CD14-positive monocyte (primary cell): ENCODE measurements at regions of chr18 and their contacts with region 1.

Region 1: DNA sequence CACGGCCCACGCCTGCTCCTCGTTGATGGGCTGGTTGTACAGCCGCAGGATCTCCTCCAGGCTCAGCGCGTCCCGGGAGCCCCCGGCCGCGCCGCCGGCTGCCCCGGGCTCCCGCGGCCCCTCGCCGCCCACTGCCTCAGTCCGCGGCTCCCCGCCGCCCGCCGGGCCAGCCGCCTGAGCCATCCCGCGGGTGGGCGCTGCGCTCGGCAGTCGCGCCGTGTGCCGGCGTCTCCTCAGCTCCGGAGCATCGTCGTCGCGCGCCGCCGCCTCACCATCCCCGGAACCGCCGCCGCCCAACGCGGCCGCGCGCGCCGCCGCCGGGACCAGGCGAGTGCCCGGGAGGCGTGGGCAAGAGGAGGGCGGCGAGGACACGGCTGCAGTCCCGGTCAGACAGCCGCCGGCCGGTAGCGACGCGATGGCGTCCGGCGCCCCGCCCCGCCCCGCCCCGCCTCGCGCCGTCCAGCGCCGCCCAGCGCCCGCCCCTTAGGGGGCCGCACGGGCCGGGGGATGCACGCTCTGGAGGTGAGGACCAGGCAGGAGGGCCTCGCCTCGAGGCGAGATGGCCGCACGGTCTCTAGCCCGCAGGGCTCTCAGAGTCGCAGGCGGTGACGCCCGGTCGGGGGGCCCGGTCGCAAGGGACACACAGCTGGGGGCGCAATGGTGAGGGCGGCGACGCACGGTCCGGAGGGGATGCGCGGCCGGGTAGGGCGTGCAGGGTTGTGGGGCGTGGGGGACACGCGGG is at the start of gene SPIRE1:
- DNase-seq: peak; percentile 38 to 47 (median 38)
- H3K4me3 ChIP-seq: peak within 1 kb of the TSS; percentile 46 to 84 (median 82)
- H3K4me3 Mint-ChIP-seq: peak within 1 kb of the TSS; percentile 83 to 91
- H3K27ac ChIP-seq: peak within 1 kb of the TSS in 1 of 2 donors; percentile 48
- H3K27ac Mint-ChIP-seq: peak within 1 kb of the TSS in 1 of 7 donors; percentile 41
- H3K4me1 ChIP-seq: peaks cover 11 to 19% of the 10 kb centered on the region in 2 donors
- H3K4me1 Mint-ChIP-seq: peaks cover 19% of the 10 kb centered on the region
- H3K27me3 ChIP-seq: peaks cover 7 to 21% of the 10 kb centered on the region in 2 donors
- H3K27me3 Mint-ChIP-seq: peaks cover 13 to 33% (median 23%) of the 10 kb centered on the region in 3 donors
- CTCF ChIP-seq: no peak
- polyA plus RNA-seq, gene SPIRE1: 1.7 to 1.9 (median 1.8) TPM

Region 2: DNA sequence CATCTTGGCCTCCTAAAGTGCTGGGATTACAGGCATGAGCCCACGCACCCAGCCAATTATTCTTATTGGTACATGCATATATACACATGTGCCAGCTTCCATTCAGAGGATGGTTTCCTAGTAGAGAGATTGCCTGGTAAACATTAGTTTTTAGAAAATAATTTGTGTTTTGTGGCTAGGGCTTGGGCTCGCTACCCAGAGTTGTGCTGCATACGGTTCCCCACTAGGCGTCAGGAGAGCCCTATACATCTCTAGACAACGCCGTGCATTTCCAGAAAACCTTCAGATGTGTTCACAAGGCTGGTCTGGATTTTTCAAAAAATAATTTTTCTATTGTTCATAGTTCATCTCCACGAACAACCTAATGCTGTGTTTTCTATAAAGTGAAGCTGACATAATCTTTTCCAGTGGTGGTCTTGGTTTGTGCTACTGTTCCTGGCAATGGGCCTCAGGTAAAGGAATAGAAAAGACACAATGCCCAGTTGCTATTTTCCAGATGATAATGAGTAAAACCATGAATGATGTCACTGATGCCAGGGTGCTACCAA is 266.2 kb before region 1 on chr18:
- intact Hi-C with region 1: loop called (anchors 2 kb)
- DNase-seq: peak; percentile 43 to 58 (median 53)
- H3K4me3 ChIP-seq: no peak overlapping the region
- H3K4me3 Mint-ChIP-seq: no peak overlapping the region
- H3K27ac ChIP-seq: no peak overlapping the region
- H3K27ac Mint-ChIP-seq: no peak overlapping the region
- H3K4me1 ChIP-seq: no peaks in the 10 kb centered on the region
- H3K4me1 Mint-ChIP-seq: peaks cover 4% of the 10 kb centered on the region
- H3K27me3 ChIP-seq: no peaks in the 10 kb centered on the region
- H3K27me3 Mint-ChIP-seq: peaks cover 1 to 3% (median 2%) of the 10 kb centered on the region in 3 donors
- CTCF ChIP-seq: peak; percentile 86

Region 3: DNA sequence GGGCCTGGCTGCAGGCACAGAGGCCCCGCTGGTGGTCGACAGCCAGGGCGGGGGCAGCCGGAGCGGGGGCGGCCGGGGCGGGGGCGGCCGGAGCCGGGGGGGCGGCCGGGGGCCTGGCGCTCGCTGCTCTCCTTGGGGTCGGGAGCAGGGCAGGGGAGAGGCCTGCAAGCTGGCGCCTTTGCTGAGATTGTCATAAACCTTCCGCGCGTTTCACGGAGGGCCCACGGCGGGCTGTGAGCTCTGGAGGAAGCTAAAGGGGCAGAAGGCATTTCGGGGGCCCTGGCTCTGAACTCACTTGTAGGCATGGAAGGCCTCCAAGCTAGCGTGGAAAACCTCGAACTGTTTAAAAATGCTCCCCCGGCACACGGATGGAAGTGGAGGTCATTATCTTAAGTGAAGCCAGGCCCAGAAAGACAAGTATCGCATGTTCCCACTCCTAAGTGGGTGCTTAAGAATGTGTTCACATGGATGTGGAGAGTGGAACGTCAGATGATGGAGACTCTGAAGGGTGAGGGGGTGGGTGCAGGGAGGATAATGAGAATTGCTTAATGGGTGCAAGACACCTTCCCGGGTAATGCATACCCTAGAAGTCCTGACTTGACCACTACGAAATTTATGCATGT is 249.5 kb before region 1 on chr18:
- intact Hi-C with region 1: loop called (anchors 5 kb)
- DNase-seq: no peak
- H3K4me3 ChIP-seq: peak overlapping the region; percentile 23 to 71 (median 40)
- H3K4me3 Mint-ChIP-seq: peak overlapping the region; percentile 72 to 86
- H3K27ac ChIP-seq: no peak overlapping the region
- H3K27ac Mint-ChIP-seq: peak overlapping the region in 3 of 7 donors; percentile 40 to 61 (median 57)
- H3K4me1 ChIP-seq: peaks cover 14 to 18% of the 10 kb centered on the region in 2 donors
- H3K4me1 Mint-ChIP-seq: peaks cover 24% of the 10 kb centered on the region
- H3K27me3 ChIP-seq: peaks cover 14 to 27% of the 10 kb centered on the region in 2 donors
- H3K27me3 Mint-ChIP-seq: peaks cover 29 to 44% (median 31%) of the 10 kb centered on the region in 3 donors
- CTCF ChIP-seq: no peak

Region 4: DNA sequence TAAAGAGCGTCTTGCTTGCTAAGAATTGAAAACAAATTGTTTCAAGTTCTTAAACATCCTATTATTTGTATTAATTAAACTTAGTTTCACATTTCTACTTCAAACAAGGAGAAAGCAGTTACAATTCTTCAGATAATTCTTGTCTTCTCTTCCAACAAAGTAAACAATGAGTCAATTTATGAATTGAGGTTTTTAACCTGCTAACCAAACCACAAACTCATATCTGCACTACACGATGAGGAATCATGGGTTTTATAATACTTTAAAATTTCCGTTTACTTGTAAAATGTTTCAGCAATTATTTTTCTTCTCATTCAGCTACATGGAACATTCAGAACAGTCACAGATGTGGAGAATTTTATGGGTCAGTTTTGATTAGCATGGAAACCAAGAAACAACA is 114.2 kb before region 1 on chr18:
- intact Hi-C with region 1: loop called in 1 of 2 experiments (anchors 5 kb)
- DNase-seq: no peak
- H3K4me3 ChIP-seq: no peak overlapping the region
- H3K4me3 Mint-ChIP-seq: no peak overlapping the region
- H3K27ac ChIP-seq: no peak overlapping the region
- H3K27ac Mint-ChIP-seq: no peak overlapping the region
- H3K4me1 ChIP-seq: no peaks in the 10 kb centered on the region
- H3K4me1 Mint-ChIP-seq: no peaks in the 10 kb centered on the region
- H3K27me3 ChIP-seq: no peaks in the 10 kb centered on the region
- H3K27me3 Mint-ChIP-seq: peaks cover 0 to 3% (median 2%) of the 10 kb centered on the region in 3 donors
- CTCF ChIP-seq: no peak

Region 5: DNA sequence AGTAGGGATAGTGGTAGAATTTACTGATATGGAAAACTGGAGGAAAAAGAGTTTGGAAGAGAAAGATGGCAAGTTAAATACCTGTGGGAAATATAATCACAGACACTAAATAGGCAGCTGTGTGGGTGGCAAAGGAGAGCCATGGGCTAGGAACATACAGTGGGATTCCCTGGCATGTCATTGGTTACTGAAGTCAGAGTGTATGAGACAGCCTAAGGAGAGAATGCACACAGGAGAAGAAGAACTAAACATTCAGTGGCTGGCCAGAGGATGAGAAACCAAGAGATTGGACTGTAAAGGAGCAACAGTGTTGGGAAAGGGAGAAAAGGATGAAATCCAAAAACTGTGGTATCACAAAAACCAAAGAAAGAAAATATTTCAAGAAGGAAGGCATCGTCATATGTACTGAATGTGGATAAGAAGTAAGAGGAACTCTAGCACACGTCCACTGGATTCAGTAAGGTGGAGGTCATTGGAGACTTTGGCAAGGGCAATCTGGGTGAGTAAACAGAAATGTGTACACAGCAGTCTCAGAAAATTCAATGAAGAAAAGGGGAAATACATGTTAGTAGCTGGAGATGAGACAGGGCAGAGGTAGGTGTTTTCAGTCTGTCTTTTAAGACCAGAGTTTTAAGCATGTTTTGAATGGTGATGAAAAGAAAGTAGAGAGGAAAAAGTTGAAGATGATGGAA is 83.2 kb before region 1 on chr18:
- intact Hi-C with region 1: no loop called
- DNase-seq: no peak
- H3K4me3 ChIP-seq: no peak overlapping the region
- H3K4me3 Mint-ChIP-seq: no peak overlapping the region
- H3K27ac ChIP-seq: no peak overlapping the region
- H3K27ac Mint-ChIP-seq: no peak overlapping the region
- H3K4me1 ChIP-seq: no peaks in the 10 kb centered on the region
- H3K4me1 Mint-ChIP-seq: no peaks in the 10 kb centered on the region
- H3K27me3 ChIP-seq: no peaks in the 10 kb centered on the region
- H3K27me3 Mint-ChIP-seq: no peaks in the 10 kb centered on the region
- CTCF ChIP-seq: no peak

Region 6: DNA sequence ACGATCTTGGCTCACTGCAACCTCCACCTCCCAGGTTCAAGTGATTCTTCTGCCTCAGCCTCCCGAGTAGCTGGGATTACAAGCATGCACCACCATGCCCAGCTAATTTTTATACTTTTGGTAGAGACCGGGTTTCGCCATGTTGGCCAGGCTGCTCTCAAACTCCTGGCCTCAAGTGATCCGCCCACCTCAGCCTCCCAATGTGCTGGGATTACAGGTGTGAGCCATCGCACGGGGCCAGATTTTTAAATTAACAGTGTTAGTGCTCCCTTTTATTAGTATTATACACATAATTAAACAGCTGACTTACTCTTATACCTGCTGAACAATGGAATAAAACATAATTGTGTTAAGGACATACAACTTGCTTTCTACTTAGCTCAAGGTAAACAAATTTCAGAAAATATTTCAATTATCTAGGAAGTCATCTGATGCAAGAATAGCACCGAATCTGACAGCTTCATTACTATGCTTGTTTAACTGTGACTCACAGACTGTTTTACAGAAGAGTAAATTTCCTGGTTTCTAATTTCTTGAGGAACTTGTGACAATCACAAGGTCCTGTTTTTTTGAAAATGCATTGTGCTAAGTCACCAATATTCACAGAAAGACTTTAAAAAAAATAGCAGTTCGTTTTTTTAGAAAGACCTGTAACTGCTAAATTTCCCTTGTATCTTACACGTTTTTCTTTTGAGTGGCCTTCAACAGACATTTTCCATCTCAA is 51.1 kb before region 1 on chr18:
- intact Hi-C with region 1: loop called (anchors 5 to 10 kb)
- DNase-seq: peak; percentile 80 to 93 (median 92)
- H3K4me3 ChIP-seq: peak overlapping the region in 1 of 3 experiments; percentile 26
- H3K4me3 Mint-ChIP-seq: peak overlapping the region in 1 of 2 donors; percentile 78
- H3K27ac ChIP-seq: peak overlapping the region; percentile 88 to 97
- H3K27ac Mint-ChIP-seq: peak overlapping the region; percentile 96 to 100 (median 99)
- H3K4me1 ChIP-seq: peaks cover 16 to 20% of the 10 kb centered on the region in 2 donors
- H3K4me1 Mint-ChIP-seq: peaks cover 25% of the 10 kb centered on the region
- H3K27me3 ChIP-seq: no peaks in the 10 kb centered on the region
- H3K27me3 Mint-ChIP-seq: no peaks in the 10 kb centered on the region
- CTCF ChIP-seq: no peak

Region 7: GRCh38 chr18:12686100-12686499 is 28.2 kb after region 1 on chr18:
- intact Hi-C with region 1: no loop called
- DNase-seq: no peak
- H3K4me3 ChIP-seq: no peak overlapping the region
- H3K4me3 Mint-ChIP-seq: no peak overlapping the region
- H3K27ac ChIP-seq: no peak overlapping the region
- H3K27ac Mint-ChIP-seq: peak overlapping the region in 1 of 7 donors; percentile 72
- H3K4me1 ChIP-seq: no peaks in the 10 kb centered on the region
- H3K4me1 Mint-ChIP-seq: peaks cover 5% of the 10 kb centered on the region
- H3K27me3 ChIP-seq: no peaks in the 10 kb centered on the region
- H3K27me3 Mint-ChIP-seq: peaks cover 0 to 2% (median 2%) of the 10 kb centered on the region in 3 donors
- CTCF ChIP-seq: no peak

Region 8: DNA sequence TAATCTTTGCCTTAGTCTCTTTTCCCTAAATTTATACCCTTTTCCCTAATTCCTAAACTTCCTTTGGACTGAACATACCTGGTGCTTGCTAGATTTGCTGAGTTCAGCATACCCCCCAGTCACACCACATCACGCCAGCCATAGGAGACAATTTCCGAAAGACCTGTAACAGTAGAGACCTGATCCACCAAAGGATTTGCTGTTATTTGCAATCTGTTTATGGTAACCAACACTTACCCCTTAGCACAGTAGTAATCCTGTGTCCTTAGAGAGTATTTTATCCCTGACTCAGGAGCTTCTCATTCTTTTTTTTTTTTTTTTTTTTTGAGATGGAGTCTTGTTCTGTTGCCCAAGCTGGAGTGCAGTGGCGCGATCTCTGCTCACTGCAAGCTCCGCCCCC is 53.6 kb after region 1 on chr18:
- intact Hi-C with region 1: no loop called
- DNase-seq: no peak
- H3K4me3 ChIP-seq: no peak overlapping the region
- H3K4me3 Mint-ChIP-seq: no peak overlapping the region
- H3K27ac ChIP-seq: peak overlapping the region in 1 of 2 donors; percentile 23
- H3K27ac Mint-ChIP-seq: peak overlapping the region in 1 of 7 donors; percentile 41
- H3K4me1 ChIP-seq: no peaks in the 10 kb centered on the region
- H3K4me1 Mint-ChIP-seq: no peaks in the 10 kb centered on the region
- H3K27me3 ChIP-seq: no peaks in the 10 kb centered on the region
- H3K27me3 Mint-ChIP-seq: no peaks in the 10 kb centered on the region
- CTCF ChIP-seq: no peak

Region 9: GRCh38 chr18:12768625-12769024 is 110.8 kb after region 1 on chr18:
- intact Hi-C with region 1: no loop called
- DNase-seq: no peak
- H3K4me3 ChIP-seq: no peak overlapping the region
- H3K4me3 Mint-ChIP-seq: no peak overlapping the region
- H3K27ac ChIP-seq: no peak overlapping the region
- H3K27ac Mint-ChIP-seq: no peak overlapping the region
- H3K4me1 ChIP-seq: no peaks in the 10 kb centered on the region
- H3K4me1 Mint-ChIP-seq: no peaks in the 10 kb centered on the region
- H3K27me3 ChIP-seq: no peaks in the 10 kb centered on the region
- H3K27me3 Mint-ChIP-seq: peaks cover 0 to 5% (median 2%) of the 10 kb centered on the region in 3 donors
- CTCF ChIP-seq: no peak